Activated CD4-positive, alpha-beta T cell treated with anti-CD3 and anti-CD28 coated beads for 36 hours (primary cell): ENCODE measurements at regions of chr4 and their contacts with region 1.

Region 1: GRCh38 chr4:113761620-113762185 is at the start of gene CAMK2D:
- DNase-seq: peak; percentile 93
- ATAC-seq: peak; percentile 62
- H3K4me3 Mint-ChIP-seq: peak within 1 kb of the TSS; percentile 97
- H3K27ac Mint-ChIP-seq: peak within 1 kb of the TSS; percentile 98
- H3K4me1 Mint-ChIP-seq: peaks cover 46% of the 10 kb centered on the region
- H3K27me3 Mint-ChIP-seq: no peaks in the 10 kb centered on the region
- total RNA-seq, gene CAMK2D: 70.3 to 71.3 TPM

Region 2: DNA sequence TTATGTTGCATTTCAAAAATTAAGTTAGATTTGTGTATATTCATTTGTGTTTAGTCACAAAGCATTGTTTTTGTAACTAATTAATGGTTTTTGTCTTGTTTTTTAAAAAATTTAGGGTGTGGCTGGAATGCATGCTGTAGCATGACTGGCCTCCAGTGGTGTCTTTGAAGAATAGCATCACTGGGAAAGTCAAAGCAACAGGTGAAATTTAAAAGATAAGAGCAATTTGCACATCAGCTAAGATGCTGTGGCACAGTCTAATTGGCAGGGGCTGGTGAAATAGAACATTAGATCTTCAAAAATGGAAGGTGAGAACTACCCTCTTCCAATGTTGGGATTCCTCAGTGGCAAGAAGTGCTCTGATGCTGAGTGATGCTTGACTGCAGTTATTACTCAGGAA is 666.9 kb before region 1 on chr4:
- CTCF ChIA-PET with region 1: no interaction called
- POLR2A ChIA-PET with region 1: no interaction called
- intact Hi-C with region 1: no loop called
- DNase-seq: no peak
- ATAC-seq: no peak
- H3K4me3 Mint-ChIP-seq: no peak overlapping the region
- H3K27ac Mint-ChIP-seq: no peak overlapping the region
- H3K4me1 Mint-ChIP-seq: no peaks in the 10 kb centered on the region
- H3K27me3 Mint-ChIP-seq: peaks cover 2% of the 10 kb centered on the region

Region 3: DNA sequence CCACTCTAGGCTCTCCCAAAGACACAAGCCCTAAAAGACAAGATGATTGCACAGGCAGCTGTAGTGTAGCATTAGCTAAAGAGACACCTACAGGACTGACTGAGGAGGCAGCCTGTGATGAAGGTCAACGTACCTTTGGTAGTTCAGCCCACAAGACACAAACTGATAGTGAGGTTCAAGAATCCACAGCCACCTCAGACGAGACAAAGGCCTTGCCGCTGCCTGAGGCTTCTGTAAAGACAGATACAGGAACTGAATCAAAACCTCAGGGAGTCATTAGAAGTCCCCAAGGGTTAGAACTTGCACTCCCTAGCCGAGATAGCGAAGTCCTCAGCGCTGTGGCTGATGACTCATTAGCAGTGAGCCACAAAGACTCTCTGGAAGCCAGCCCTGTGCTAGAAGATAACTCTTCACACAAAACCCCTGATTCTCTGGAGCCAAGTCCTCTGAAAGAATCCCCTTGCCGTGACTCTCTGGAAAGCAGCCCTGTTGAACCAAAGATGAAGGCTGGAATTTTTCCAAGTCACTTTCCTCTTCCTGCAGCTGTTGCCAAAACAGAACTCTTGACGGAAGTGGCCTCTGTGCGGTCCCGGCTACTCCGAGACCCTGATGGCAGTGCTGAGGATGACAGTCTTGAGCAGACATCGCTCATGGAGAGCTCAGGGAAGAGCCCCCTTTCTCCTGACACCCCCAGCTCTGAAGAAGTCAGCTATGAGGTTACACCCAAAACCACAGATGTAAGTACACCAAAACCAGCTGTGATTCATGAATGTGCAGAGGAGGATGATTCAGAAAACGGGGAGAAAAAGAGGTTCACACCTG is 405.9 kb before region 1 on chr4:
- CTCF ChIA-PET with region 1: no interaction called
- POLR2A ChIA-PET with region 1: no interaction called
- intact Hi-C with region 1: loop called (anchors 1 kb)
- DNase-seq: peak; percentile 88
- ATAC-seq: peak; percentile 95
- H3K4me3 Mint-ChIP-seq: peak overlapping the region; percentile 47
- H3K27ac Mint-ChIP-seq: peak overlapping the region; percentile 94
- H3K4me1 Mint-ChIP-seq: peaks cover 43% of the 10 kb centered on the region
- H3K27me3 Mint-ChIP-seq: peaks cover 42% of the 10 kb centered on the region

Region 4: DNA sequence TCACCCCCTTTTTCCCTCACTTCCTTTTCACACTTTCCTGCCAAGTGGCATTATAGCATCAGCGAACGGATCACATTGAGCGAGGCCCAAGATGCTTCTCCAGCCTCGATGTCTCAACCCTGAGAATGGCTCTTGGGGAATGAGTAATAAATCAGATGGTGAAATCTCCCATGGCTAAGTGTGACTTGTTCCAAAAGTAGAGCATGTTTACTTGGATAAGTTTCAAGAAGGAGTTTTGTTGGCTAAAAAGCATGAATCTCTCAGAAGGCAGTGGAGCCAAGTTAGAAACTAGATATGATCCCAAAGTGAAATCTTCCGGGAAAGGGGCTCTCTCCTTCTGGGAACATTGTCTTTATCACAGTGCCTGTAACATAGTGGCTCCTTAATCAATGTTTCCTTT is 316.4 kb before region 1 on chr4:
- CTCF ChIA-PET with region 1: no interaction called
- POLR2A ChIA-PET with region 1: no interaction called
- intact Hi-C with region 1: loop called (anchors 1 to 5 kb)
- DNase-seq: no peak
- ATAC-seq: no peak
- H3K4me3 Mint-ChIP-seq: no peak overlapping the region
- H3K27ac Mint-ChIP-seq: peak overlapping the region; percentile 85
- H3K4me1 Mint-ChIP-seq: peaks cover 27% of the 10 kb centered on the region
- H3K27me3 Mint-ChIP-seq: no peaks in the 10 kb centered on the region

Region 5: DNA sequence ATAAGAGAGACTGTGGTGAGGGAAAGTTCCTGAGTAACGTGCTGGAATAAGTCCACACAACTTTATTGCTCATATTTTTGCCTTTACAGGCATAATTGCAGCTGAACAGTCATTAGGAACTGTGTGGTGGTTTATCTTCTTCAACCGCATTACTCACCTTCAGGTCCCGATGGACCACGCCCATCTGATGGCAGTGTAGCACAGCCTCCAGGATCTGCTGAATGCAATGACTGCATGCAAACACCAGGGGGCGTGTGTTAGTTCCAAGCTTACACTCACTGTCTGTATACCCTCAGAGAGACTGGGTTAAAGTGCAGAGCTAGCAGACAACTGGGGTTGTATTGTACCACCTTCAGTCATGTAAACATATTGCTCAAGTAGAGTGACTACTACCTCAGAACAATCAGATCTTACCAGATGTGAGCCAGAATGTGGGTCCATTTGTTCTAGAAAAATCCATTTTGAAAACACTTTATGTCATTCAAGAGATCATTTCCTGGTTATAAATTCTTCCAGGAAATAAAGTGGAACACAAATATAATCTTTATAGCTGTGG is 214.1 kb before region 1 on chr4:
- CTCF ChIA-PET with region 1: interaction called, 10 read pairs
- POLR2A ChIA-PET with region 1: interaction called, 4 read pairs
- intact Hi-C with region 1: loop called (anchors 1 kb)
- DNase-seq: peak; percentile 95
- ATAC-seq: peak; percentile 99
- H3K4me3 Mint-ChIP-seq: no peak overlapping the region
- H3K27ac Mint-ChIP-seq: peak overlapping the region; percentile 49
- H3K4me1 Mint-ChIP-seq: peaks cover 24% of the 10 kb centered on the region
- H3K27me3 Mint-ChIP-seq: no peaks in the 10 kb centered on the region

Region 6: DNA sequence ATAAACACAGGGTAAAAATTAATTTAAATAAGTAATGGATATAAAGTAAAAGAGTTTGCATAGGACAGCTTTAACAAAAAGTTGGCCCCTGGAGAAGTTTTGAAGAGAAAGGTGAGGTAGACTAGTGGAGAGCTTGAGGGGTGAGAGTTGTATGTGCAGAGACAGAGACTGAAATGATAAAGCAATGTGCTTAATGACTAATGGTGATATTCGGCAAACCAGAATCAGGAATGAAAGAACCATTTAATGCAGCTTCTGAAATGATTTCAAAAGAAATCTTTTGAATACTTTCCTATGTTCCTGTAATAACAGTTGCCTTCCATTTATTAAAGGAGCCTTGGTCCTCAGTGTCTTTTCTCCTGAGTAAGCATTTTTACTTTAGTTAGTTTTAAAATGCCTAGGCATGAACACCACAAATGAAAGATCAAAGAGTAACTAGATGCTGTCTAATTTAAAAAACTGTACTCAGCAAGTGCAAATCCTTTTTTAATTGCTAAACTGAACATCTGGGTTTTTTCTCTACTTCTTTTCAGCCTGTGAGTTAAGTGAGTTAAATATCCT is 28.7 kb before region 1 on chr4:
- CTCF ChIA-PET with region 1: interaction called, 3 read pairs
- POLR2A ChIA-PET with region 1: no interaction called
- intact Hi-C with region 1: loop called (anchors 1 to 2 kb)
- DNase-seq: no peak
- ATAC-seq: peak; percentile 60
- H3K4me3 Mint-ChIP-seq: no peak overlapping the region
- H3K27ac Mint-ChIP-seq: peak overlapping the region; percentile 1
- H3K4me1 Mint-ChIP-seq: peaks cover 78% of the 10 kb centered on the region
- H3K27me3 Mint-ChIP-seq: no peaks in the 10 kb centered on the region

Region 7: GRCh38 chr4:113901994-113902787 is 140.5 kb after region 1 on chr4:
- CTCF ChIA-PET with region 1: no interaction called
- POLR2A ChIA-PET with region 1: no interaction called
- intact Hi-C with region 1: loop called (anchors 5 to 10 kb)
- DNase-seq: peak; percentile 78
- ATAC-seq: peak; percentile 96
- H3K4me3 Mint-ChIP-seq: peak overlapping the region; percentile 20
- H3K27ac Mint-ChIP-seq: peak overlapping the region; percentile 81
- H3K4me1 Mint-ChIP-seq: peaks cover 64% of the 10 kb centered on the region
- H3K27me3 Mint-ChIP-seq: no peaks in the 10 kb centered on the region

Region 8: DNA sequence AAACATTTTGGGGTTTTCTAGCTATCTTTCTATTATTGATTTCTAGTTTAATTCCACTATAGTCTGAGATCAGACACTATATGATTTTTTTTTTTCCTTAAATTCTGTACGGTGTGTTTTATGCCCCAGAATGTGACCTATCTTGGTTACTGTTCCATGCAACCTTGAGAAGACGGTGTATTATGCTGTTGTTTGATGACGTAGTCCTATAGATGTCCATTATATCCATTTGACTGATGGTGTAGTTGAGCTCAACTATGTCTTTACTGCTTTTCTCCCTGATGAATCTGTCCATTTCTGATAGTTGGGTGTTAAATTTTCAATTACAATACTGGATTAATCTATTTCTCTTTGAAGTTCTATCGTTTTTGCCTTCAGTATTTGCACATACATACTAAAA is 1139.2 kb after region 1 on chr4:
- CTCF ChIA-PET with region 1: no interaction called
- POLR2A ChIA-PET with region 1: no interaction called
- intact Hi-C with region 1: no loop called
- DNase-seq: no peak
- ATAC-seq: no peak
- H3K4me3 Mint-ChIP-seq: no peak overlapping the region
- H3K27ac Mint-ChIP-seq: no peak overlapping the region
- H3K4me1 Mint-ChIP-seq: no peaks in the 10 kb centered on the region
- H3K27me3 Mint-ChIP-seq: no peaks in the 10 kb centered on the region